Common myeloid progenitor, CD34-positive (primary cell): ENCODE measurements at regions of chr9 and their contacts with region 1.

Region 1: GRCh38 chr9:128438343-128439109 is 17.3 kb upstream of the ODF2 start:
- DNase-seq: peak; percentile 77 to 88 (median 82)
- H3K4me3 ChIP-seq: peak overlapping the region in 1 of 7 experiments; percentile 32
- H3K27ac ChIP-seq: no peak overlapping the region
- H3K4me1 ChIP-seq: peaks cover 0 to 9% (median 8%) of the 10 kb centered on the region in 4 experiments
- H3K27me3 ChIP-seq: no peaks in the 10 kb centered on the region

Region 2: DNA sequence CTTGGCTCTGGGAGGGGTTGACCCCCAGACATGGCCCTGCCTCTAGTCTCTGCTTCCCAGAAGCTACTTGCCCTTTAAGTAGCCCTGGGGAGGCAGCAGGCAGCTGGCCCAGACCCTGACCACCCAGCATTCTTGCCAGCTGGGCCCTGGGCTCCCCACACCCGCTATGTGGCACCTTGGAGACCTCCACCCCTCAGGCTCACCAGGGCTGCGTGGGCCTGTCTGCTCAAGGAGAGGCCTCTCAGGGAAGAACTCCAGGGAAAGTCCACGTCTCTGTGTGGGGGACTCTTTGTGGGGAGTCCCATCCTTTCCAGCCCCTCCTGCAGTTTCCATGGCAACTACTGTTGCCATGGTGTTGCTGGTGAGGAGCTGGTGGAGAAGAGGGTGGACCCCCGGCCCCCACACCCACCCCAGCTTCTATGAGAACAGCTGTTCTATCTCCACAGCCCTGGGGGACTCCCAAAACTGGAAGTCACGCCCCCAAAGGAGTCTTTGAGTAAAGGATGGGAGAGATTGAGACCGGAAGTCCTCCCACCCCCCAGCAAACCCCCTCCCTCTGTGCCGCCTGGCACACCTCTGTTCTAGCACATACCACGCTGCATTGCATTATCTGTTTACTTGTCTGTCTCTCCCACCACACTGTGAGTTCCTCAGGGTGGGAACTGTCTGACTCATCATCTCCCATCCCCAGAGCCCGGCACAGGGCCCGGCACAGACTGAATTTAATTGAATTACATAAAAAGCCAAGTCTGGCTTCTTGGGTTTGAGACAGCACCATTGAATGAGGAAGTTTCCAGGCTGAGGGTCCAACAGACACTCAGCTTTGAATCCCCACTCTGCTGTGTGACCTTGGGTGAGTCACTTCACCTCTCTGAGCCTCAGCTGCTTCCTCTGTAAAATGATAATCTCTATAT is 222.8 kb before region 1 on chr9:
- CTCF ChIA-PET with region 1: no interaction called
- POLR2A ChIA-PET with region 1: no interaction called
- DNase-seq: no peak
- H3K4me3 ChIP-seq: no peak overlapping the region
- H3K27ac ChIP-seq: no peak overlapping the region
- H3K4me1 ChIP-seq: peaks cover 0 to 12% (median 10%) of the 10 kb centered on the region in 4 experiments
- H3K27me3 ChIP-seq: no peaks in the 10 kb centered on the region

Region 3: DNA sequence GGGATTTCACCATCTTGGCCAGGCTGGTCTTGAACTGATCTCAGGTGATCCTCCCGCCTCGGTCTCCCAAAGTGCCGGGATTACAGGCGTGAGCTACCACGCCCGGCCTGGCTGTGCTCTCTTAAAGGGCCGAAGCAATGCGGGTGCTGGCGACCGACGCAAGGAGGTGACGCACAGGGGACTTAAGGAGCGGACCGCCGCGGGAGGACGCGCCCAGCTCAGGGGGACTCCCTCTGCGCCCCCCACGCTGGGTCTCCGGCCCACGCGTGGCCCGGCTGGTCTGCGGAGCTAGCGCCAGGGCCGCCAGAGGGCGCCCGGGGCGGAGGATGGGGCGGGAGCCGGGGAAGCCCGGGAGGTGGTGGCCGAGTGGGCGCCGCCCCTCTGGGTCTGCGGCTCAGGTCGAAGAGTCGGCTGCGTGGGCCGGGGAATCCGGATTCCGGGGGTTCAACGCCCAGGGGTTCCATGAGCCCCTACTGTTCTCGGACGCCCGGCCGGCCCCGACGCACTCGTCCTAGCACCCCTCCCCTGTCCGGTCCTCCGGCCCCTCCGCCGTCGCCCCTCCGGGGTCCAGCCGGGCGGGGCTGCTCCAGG is 18.4 kb before region 1 on chr9:
- CTCF ChIA-PET with region 1: interaction called, 19 read pairs
- POLR2A ChIA-PET with region 1: no interaction called
- DNase-seq: peak; percentile 64 to 74 (median 71)
- H3K4me3 ChIP-seq: peak overlapping the region; percentile 65 to 88 (median 81)
- H3K27ac ChIP-seq: no peak overlapping the region
- H3K4me1 ChIP-seq: peaks cover 0 to 29% (median 22%) of the 10 kb centered on the region in 4 experiments
- H3K27me3 ChIP-seq: peaks cover 0 to 26% (median 7%) of the 10 kb centered on the region in 5 experiments

Region 4: DNA sequence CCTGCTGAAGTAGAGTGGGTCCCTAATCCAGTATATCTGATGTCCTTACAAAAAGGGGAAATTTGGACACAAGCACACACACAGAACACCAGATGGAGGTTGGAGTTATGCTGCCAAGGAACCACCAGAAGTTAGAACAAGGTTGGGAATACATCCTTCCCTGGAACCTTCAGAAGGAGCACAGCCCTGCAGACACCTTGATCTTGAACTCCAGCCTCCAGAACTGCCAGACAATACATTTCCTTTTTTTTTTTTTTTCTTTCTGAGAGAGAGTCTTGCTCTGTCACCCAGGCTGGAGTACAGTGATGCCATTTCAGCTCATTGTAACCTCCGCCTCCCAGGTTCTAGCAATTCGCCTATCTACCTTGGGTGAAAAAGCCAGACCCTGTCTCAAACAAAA is 10.2 kb after region 1 on chr9:
- CTCF ChIA-PET with region 1: interaction called, 30 read pairs
- POLR2A ChIA-PET with region 1: no interaction called
- DNase-seq: no peak
- H3K4me3 ChIP-seq: no peak overlapping the region
- H3K27ac ChIP-seq: no peak overlapping the region
- H3K4me1 ChIP-seq: no peaks in the 10 kb centered on the region
- H3K27me3 ChIP-seq: no peaks in the 10 kb centered on the region